ENCODE measurements at regions of chr1 and their contacts with region 1.

Region 1: DNA sequence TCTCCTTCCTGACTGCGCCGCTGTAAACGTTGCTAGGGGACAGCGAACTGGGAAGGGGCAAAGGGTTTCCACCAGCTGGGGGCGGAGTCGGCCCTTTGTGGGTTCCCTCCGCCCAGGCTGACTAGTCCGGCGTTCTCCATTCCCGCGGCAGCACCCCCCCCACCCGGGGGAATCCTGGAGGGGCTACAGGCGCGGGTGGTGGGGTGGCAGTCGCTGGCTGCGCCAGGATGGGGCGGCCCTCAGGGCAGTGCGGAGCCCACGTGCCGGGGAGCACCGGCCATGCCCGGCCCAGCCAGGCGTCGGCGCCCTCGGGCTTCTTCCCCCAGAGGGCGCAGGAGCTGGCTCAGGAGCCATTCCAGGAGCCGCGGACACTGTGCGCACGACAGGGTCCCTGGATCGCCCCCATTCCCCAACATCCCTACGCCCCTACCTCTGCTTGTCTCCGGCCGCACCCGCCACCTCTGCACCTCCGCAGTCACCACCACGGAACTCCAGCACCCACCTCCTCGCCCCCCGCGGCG is 476 bp downstream of the BATF3 start:
- DNase-seq: peak; percentile 86
- H3K4me3 Mint-ChIP-seq: peak overlapping the region; percentile 86
- H3K27ac Mint-ChIP-seq: peak overlapping the region; percentile 87
- H3K4me1 Mint-ChIP-seq: peaks cover 51% of the 10 kb centered on the region
- H3K27me3 Mint-ChIP-seq: peaks cover 15% of the 10 kb centered on the region

Region 2: GRCh38 chr1:212341090-212341489 is 358.1 kb before region 1 on chr1:
- intact Hi-C with region 1: no loop called
- DNase-seq: no peak
- H3K4me3 Mint-ChIP-seq: no peak overlapping the region
- H3K27ac Mint-ChIP-seq: no peak overlapping the region
- H3K4me1 Mint-ChIP-seq: no peaks in the 10 kb centered on the region
- H3K27me3 Mint-ChIP-seq: no peaks in the 10 kb centered on the region

Region 3: GRCh38 chr1:212665241-212666115 is 33.7 kb before region 1 on chr1:
- intact Hi-C with region 1: loop called (anchors 1 kb)
- DNase-seq: peak; percentile 94
- H3K4me3 Mint-ChIP-seq: peak overlapping the region; percentile 76
- H3K27ac Mint-ChIP-seq: peak overlapping the region; percentile 66
- H3K4me1 Mint-ChIP-seq: peaks cover 27% of the 10 kb centered on the region
- H3K27me3 Mint-ChIP-seq: peaks cover 24% of the 10 kb centered on the region

Region 4: GRCh38 chr1:212712451-212713303 is 13.5 kb after region 1 on chr1:
- intact Hi-C with region 1: loop called (anchors 1 kb)
- DNase-seq: no peak
- H3K4me3 Mint-ChIP-seq: no peak overlapping the region
- H3K27ac Mint-ChIP-seq: peak overlapping the region; percentile 56
- H3K4me1 Mint-ChIP-seq: peaks cover 26% of the 10 kb centered on the region
- H3K27me3 Mint-ChIP-seq: peaks cover 9% of the 10 kb centered on the region

Region 5: GRCh38 chr1:212727386-212728181 is 28.4 kb after region 1 on chr1:
- intact Hi-C with region 1: no loop called
- DNase-seq: no peak
- H3K4me3 Mint-ChIP-seq: no peak overlapping the region
- H3K27ac Mint-ChIP-seq: peak overlapping the region; percentile 21
- H3K4me1 Mint-ChIP-seq: peaks cover 37% of the 10 kb centered on the region
- H3K27me3 Mint-ChIP-seq: no peaks in the 10 kb centered on the region

Region 6: DNA sequence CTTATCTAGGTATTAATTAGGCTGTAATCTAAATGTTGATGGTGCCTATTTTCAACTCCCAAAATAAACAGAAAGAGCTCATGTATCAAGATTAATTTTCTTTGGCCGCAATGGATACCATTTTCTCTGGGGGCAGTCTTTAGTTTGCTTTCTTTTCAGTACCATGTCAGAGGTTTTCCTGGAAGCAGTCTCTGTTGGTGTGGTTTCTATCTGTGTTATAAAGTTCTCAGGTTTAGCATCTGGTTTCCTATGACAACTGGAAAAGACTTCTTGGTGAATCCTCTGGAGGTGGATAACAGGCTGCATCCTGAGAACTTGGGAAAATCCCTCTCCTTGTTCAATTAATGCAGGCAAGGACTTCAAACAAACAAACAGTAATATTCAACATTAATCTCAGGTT is 39.2 kb after region 1 on chr1:
- intact Hi-C with region 1: no loop called
- DNase-seq: no peak
- H3K4me3 Mint-ChIP-seq: peak overlapping the region; percentile 13
- H3K27ac Mint-ChIP-seq: peak overlapping the region; percentile 73
- H3K4me1 Mint-ChIP-seq: peaks cover 20% of the 10 kb centered on the region
- H3K27me3 Mint-ChIP-seq: no peaks in the 10 kb centered on the region

Region 7: GRCh38 chr1:212752252-212752933 is 53.2 kb after region 1 on chr1:
- intact Hi-C with region 1: loop called (anchors 2 kb)
- DNase-seq: no peak
- H3K4me3 Mint-ChIP-seq: no peak overlapping the region
- H3K27ac Mint-ChIP-seq: no peak overlapping the region
- H3K4me1 Mint-ChIP-seq: peaks cover 32% of the 10 kb centered on the region
- H3K27me3 Mint-ChIP-seq: no peaks in the 10 kb centered on the region